Stomach (tissue), 19 donors: ENCODE measurements at regions of chr11 and their contacts with region 1.

Region 1: GRCh38 chr11:33065445-33066178 is 26.2 kb downstream of the TCP11L1 start:
- DNase-seq: peak; percentile 76 to 90
- H3K4me3 ChIP-seq: no peak overlapping the region
- H3K27ac ChIP-seq: no peak overlapping the region
- H3K4me1 ChIP-seq: peaks cover 4 to 48% (median 22%) of the 10 kb centered on the region in 4 donors
- H3K27me3 ChIP-seq: no peaks in the 10 kb centered on the region
- CTCF ChIP-seq: peak in 5 of 7 experiments; percentile 79 to 87 (median 84)
- EP300 ChIP-seq: no peak
- POLR2A ChIP-seq: no peak

Region 2: DNA sequence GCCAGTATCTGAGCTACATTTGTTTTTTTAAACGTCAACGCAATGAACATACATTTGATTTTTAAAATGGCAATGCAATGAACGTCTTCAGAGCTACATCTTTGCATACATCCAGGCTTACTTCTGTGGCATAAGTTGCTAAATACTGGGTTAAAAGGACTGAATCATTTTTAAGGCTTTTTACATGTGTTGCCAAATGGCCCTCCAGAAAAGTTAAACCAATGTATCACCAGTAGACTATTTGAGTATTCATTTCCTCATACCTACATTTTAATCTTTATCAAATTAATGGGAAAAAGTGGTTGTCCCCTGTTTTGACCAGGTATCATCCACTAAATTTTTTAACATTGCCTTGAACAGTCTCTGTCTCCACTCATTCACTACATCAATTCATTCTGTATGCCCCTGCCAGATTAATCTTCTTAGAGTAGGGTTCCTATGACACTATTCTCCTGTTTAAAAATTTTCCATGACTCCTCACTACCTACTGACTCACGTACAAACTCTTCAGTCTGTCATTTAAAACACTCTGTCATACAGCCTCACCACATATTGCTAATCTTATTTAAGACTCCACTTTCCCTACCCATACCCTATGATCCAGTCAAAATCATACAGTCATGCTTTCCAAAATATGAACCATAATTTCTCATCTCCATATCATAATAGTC is 248.3 kb before region 1 on chr11:
- intact Hi-C with region 1: loop called (anchors 10 kb)
- DNase-seq: no peak
- H3K4me3 ChIP-seq: no peak overlapping the region
- H3K27ac ChIP-seq: no peak overlapping the region
- H3K4me1 ChIP-seq: no peaks in the 10 kb centered on the region
- H3K27me3 ChIP-seq: no peaks in the 10 kb centered on the region
- CTCF ChIP-seq: no peak
- EP300 ChIP-seq: no peak
- POLR2A ChIP-seq: no peak

Region 3: GRCh38 chr11:32960553-32961164 is 105.0 kb before region 1 on chr11:
- intact Hi-C with region 1: loop called (anchors 5 kb)
- DNase-seq: peak in 1 of 2 donors; percentile 74
- H3K4me3 ChIP-seq: no peak overlapping the region
- H3K27ac ChIP-seq: no peak overlapping the region
- H3K4me1 ChIP-seq: no peaks in the 10 kb centered on the region
- H3K27me3 ChIP-seq: no peaks in the 10 kb centered on the region
- CTCF ChIP-seq: peak in 5 of 7 experiments; percentile 22 to 69 (median 54)
- EP300 ChIP-seq: no peak
- POLR2A ChIP-seq: no peak

Region 4: GRCh38 chr11:33207408-33207985 is 141.9 kb after region 1 on chr11:
- intact Hi-C with region 1: no loop called
- DNase-seq: peak; percentile 26 to 47
- H3K4me3 ChIP-seq: no peak overlapping the region
- H3K27ac ChIP-seq: peak overlapping the region in 4 of 5 donors; percentile 6 to 50 (median 25)
- H3K4me1 ChIP-seq: peaks cover 3 to 12% (median 8%) of the 10 kb centered on the region in 4 donors
- H3K27me3 ChIP-seq: no peaks in the 10 kb centered on the region
- CTCF ChIP-seq: no peak
- EP300 ChIP-seq: no peak
- POLR2A ChIP-seq: no peak